CD8-positive, alpha-beta memory T cell (primary cell): ENCODE measurements at regions of chr12 and their contacts with region 1.

Region 1: DNA sequence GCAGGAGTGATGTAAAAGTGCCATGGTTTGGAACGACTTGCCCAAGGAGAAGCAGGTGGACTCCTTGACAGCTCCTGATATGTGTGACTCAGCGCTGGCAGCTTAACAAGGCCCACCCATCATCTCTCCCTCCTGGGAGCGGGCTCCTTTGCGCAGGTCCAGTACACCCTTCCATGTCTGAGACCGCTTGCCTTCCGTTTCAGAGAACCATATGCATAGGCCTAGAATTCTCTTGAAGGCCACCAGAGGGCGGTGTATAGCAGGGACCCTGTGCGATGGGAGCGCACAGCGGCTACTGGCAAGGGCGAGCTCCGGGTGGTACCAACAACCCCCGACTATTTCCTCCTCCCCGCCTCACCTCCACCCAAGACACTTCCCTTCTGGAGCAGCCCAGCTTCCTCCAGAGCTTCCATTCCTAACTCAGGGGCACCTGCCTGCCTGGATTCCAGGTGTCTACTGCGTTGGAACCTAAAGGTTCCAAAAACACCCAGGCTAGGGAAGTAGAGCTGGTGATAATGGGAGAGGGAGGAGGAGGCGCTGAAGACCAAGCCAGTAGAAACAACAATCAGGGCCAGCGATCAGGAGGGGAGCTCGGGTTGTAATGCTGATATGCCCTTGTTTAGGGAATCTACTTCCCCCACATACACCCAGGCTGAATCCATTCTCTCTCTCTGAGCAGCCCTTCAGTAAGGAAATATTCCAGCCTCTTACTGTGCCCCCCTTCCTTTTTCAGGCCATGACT is 6.2 kb downstream of the DHH start:
- DNase-seq: peak; percentile 55 to 79 (median 66)
- H3K4me3 ChIP-seq: no peak overlapping the region
- H3K4me3 Mint-ChIP-seq: peak overlapping the region in 5 of 7 donors; percentile 31 to 47 (median 44)
- H3K27ac ChIP-seq: no peak overlapping the region
- H3K27ac Mint-ChIP-seq: peak overlapping the region in 2 of 8 donors; percentile 19 to 43
- H3K4me1 ChIP-seq: peaks cover 46% of the 10 kb centered on the region
- H3K4me1 Mint-ChIP-seq: peaks cover 29 to 51% (median 49%) of the 10 kb centered on the region in 3 donors
- H3K27me3 ChIP-seq: peaks cover 45% of the 10 kb centered on the region
- H3K27me3 Mint-ChIP-seq: peaks cover 43 to 47% of the 10 kb centered on the region in 2 donors

Region 2: GRCh38 chr12:49069507-49070346 is 18.6 kb before region 1 on chr12 and contains the start of gene RHEBL1:
- CTCF ChIA-PET with region 1: interaction called, 111 read pairs
- POLR2A ChIA-PET with region 1: interaction called, 3 read pairs
- DNase-seq: peak; percentile 98 to 99 (median 99)
- H3K4me3 ChIP-seq: peak within 1 kb of the TSS; percentile 93
- H3K4me3 Mint-ChIP-seq: peak within 1 kb of the TSS; percentile 87 to 98 (median 94)
- H3K27ac ChIP-seq: peak within 1 kb of the TSS; percentile 83
- H3K27ac Mint-ChIP-seq: peak within 1 kb of the TSS; percentile 72 to 99 (median 91)
- H3K4me1 ChIP-seq: peaks cover 16% of the 10 kb centered on the region
- H3K4me1 Mint-ChIP-seq: peaks cover 18 to 21% (median 21%) of the 10 kb centered on the region in 3 donors
- H3K27me3 ChIP-seq: no peaks in the 10 kb centered on the region
- H3K27me3 Mint-ChIP-seq: no peaks in the 10 kb centered on the region
- total RNA-seq, gene RHEBL1: 10.1 to 10.2 TPM

Region 3: GRCh38 chr12:49110464-49111155 is 22.2 kb after region 1 on chr12 and contains the start of gene LMBR1L:
- CTCF ChIA-PET with region 1: interaction called, 47 read pairs
- POLR2A ChIA-PET with region 1: interaction called, 11 read pairs
- DNase-seq: peak; percentile 92 to 98 (median 96)
- H3K4me3 ChIP-seq: peak within 1 kb of the TSS; percentile 93
- H3K4me3 Mint-ChIP-seq: peak within 1 kb of the TSS; percentile 97 to 99 (median 99)
- H3K27ac ChIP-seq: peak within 1 kb of the TSS; percentile 87
- H3K27ac Mint-ChIP-seq: peak within 1 kb of the TSS; percentile 86 to 98 (median 98)
- H3K4me1 ChIP-seq: peaks cover 21% of the 10 kb centered on the region
- H3K4me1 Mint-ChIP-seq: peaks cover 36 to 44% (median 43%) of the 10 kb centered on the region in 3 donors
- H3K27me3 ChIP-seq: no peaks in the 10 kb centered on the region
- H3K27me3 Mint-ChIP-seq: no peaks in the 10 kb centered on the region
- total RNA-seq, gene LMBR1L: 47.2 to 48.7 TPM

Region 4: DNA sequence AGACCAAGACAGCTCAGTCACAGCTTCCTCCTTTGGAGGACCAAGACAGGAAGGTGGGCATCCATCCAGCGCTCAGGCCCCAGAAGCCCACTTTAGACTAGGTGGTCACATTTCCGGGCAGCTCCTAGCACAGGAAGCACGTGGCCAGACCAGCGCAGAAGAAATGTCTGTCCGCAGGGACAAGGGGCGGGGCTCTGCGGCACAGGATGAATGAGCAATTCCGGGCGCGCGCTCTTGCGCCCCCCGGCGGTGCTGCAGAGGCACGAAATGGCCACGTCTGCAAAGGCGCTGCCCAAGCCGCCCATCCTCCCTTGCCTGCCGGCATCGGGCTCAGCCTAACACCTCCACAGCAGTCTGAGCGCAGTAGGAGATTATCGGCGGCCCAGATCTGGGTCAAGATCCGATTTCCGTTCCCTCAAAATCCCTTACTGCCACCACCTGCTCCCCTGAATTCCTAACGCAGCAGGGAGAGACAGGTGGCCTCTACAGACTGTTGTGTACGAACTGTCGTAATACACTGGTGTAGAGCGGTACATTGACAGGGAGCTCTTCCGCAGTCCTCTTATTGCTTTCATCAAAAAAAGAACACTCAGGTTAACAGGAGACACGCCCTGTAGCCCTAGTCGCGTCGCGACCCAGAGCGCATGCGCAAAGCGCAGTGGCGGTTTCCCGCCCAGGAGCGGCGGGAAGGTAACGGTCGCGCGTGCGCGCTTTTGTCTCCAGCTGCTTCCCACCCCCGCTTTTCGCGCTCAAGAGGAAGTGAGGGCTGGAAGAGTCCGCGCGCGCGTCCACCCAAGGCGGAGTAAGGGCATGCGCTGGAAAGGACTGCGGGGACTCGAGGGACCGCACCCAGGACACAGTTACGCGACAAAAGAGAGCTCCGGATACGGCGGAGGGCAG is 42.0 kb after region 1 on chr12:
- CTCF ChIA-PET with region 1: interaction called, 70 read pairs
- POLR2A ChIA-PET with region 1: interaction called, 18 read pairs
- DNase-seq: peak; percentile 86 to 97 (median 93)
- H3K4me3 ChIP-seq: peak overlapping the region; percentile 90
- H3K4me3 Mint-ChIP-seq: peak overlapping the region; percentile 97 to 100 (median 98)
- H3K27ac ChIP-seq: peak overlapping the region; percentile 98
- H3K27ac Mint-ChIP-seq: peak overlapping the region; percentile 96 to 99 (median 98)
- H3K4me1 ChIP-seq: peaks cover 26% of the 10 kb centered on the region
- H3K4me1 Mint-ChIP-seq: peaks cover 39 to 58% (median 55%) of the 10 kb centered on the region in 3 donors
- H3K27me3 ChIP-seq: no peaks in the 10 kb centered on the region
- H3K27me3 Mint-ChIP-seq: peaks cover 0 to 8% of the 10 kb centered on the region in 2 donors

Region 5: GRCh38 chr12:49225556-49226181 is 137.3 kb after region 1 on chr12:
- CTCF ChIA-PET with region 1: interaction called, 14 read pairs
- POLR2A ChIA-PET with region 1: no interaction called
- DNase-seq: no peak
- H3K4me3 ChIP-seq: no peak overlapping the region
- H3K4me3 Mint-ChIP-seq: no peak overlapping the region
- H3K27ac ChIP-seq: no peak overlapping the region
- H3K27ac Mint-ChIP-seq: no peak overlapping the region
- H3K4me1 ChIP-seq: no peaks in the 10 kb centered on the region
- H3K4me1 Mint-ChIP-seq: no peaks in the 10 kb centered on the region
- H3K27me3 ChIP-seq: no peaks in the 10 kb centered on the region
- H3K27me3 Mint-ChIP-seq: peaks cover 0 to 3% of the 10 kb centered on the region in 2 donors